ENCODE measurements at regions of chr6 and their contacts with region 1.

Region 1: DNA sequence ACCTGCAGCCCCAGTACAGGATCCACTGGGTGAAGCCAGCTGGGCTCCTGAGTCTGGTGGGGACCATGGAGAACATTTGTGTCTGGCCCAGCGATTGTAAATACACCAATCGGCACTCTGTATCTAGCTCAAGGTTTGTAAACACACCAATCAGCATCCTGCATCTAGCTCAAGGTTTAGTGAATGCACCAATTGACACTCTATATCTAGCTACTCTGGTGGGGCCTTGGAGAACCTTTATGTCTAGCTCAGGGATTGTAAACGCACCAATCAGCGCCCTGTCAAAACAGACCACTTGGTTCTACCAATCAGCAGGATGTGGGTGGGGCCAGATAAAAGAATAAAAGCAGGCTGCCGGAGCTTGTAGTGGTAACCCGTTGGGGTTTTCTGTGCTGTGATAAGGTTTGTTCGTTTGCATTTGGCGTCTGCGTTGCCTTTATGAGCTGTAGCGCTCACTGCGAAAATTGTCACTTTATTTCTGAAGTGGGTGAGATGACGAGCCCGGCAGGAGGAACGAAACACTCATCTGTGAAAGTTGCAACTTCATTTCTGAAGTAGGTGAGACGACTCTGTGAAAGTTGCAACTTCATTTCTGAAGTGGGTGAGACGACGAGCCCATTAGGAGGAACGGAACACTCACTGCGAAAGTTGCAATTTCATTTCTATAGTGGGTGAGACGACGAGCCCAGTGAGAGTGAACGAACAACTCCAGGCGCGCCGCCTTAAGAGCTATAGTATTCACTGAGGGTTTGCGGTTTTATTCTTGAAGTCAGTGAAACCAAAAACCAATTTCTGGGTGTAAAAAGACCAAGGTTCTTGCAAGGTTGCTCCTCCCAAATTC is 31.1 kb downstream of the SERPINB6 start:
- DNase-seq: no peak
- ATAC-seq: no peak
- H3K4me3 ChIP-seq: no peak overlapping the region
- H3K27ac ChIP-seq: no peak overlapping the region
- H3K4me1 ChIP-seq: no peaks in the 10 kb centered on the region
- H3K27me3 ChIP-seq: no peaks in the 10 kb centered on the region
- CTCF ChIP-seq: no peak
- POLR2A ChIP-seq: peak in 1 of 3 donors; percentile 17

Region 2: DNA sequence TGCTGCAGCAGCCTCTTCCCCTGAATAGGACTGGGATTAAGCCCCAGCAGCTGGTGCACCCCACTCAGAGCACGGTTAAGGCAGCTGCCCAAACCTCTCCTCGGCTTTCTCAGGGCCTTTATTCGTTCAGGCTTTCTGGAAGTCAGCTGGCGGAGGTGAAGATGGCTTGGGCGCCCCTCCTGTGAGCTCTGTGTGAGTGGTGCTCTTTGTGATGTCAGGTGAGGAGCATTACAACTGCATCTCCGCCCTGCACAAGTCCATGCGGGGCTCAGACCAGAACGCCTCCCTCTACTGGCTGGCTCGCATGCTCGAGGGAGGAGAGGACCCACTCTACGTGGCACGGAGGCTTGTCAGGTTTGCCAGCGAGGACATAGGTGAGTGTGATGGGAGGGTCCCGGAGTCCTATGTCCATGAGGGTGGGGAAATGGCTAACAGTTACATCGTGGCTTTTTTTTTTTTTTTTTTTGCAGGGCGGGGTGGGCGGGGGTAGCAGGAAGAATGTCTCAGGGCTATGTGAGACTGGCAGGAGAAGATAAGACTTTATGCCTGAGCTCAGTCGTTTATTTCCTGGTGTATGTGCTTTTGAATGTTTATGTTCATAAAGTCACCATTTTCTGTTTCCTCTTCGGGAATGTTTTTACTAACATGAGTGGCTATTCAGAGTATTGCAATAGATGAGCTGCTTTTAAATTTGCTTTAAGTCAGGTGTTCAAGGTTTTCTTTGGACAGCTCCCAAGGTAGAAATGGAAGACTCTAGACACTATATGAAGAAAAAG is 156.9 kb before region 1 on chr6:
- intact Hi-C with region 1: loop called (anchors 10 kb)
- DNase-seq: no peak
- ATAC-seq: no peak
- H3K4me3 ChIP-seq: no peak overlapping the region
- H3K27ac ChIP-seq: no peak overlapping the region
- H3K4me1 ChIP-seq: peaks cover 4% of the 10 kb centered on the region
- H3K27me3 ChIP-seq: no peaks in the 10 kb centered on the region
- CTCF ChIP-seq: peak in 1 of 7 experiments; percentile 9
- POLR2A ChIP-seq: no peak

Region 3: GRCh38 chr6:2857580-2858337 is 82.5 kb before region 1 on chr6:
- intact Hi-C with region 1: loop called (anchors 5 kb)
- DNase-seq: no peak
- ATAC-seq: no peak
- H3K4me3 ChIP-seq: no peak overlapping the region
- H3K27ac ChIP-seq: peak overlapping the region in 3 of 4 donors; percentile 8 to 62 (median 45)
- H3K4me1 ChIP-seq: peaks cover 30% of the 10 kb centered on the region
- H3K27me3 ChIP-seq: no peaks in the 10 kb centered on the region
- CTCF ChIP-seq: no peak
- POLR2A ChIP-seq: no peak

Region 4: DNA sequence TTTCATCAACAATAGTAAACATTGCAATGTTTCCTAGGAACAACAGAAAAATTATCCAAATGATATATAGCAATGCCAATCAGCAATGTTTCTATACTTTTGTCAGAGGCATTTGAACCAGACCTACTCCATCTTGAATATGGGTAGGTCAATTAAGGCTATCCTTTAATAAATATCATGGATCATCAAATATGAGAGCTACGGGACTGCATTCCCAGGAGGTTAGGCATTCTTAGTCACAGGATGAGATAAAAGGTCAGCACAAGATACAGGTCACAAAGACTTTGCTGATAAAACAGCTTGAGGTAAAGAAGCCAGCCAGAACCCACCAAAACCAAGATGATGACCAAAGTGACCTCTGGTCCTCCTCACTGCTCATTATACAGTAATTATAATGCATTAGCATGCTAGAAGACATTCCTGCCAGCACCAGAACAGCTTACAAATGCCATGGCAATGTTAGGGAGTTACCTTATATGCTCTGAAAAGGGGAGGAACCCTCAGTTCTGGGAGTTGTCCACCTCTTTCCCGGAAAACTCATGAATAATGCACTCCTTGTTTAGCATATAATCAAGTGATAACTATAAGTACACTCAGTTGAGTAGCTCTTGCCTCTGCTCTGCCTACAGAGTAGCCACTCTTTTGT is 39.7 kb after region 1 on chr6:
- intact Hi-C with region 1: loop called (anchors 5 kb)
- DNase-seq: no peak
- ATAC-seq: peak; percentile 27
- H3K4me3 ChIP-seq: no peak overlapping the region
- H3K27ac ChIP-seq: no peak overlapping the region
- H3K4me1 ChIP-seq: no peaks in the 10 kb centered on the region
- H3K27me3 ChIP-seq: no peaks in the 10 kb centered on the region
- CTCF ChIP-seq: no peak
- POLR2A ChIP-seq: no peak

Region 5: GRCh38 chr6:2999618-3000557 is 59.7 kb after region 1 on chr6 and contains the start of gene NQO2:
- intact Hi-C with region 1: no loop called
- DNase-seq: peak; percentile 93 to 97 (median 96)
- ATAC-seq: peak; percentile 89
- H3K4me3 ChIP-seq: peak within 1 kb of the TSS; percentile 60 to 79
- H3K27ac ChIP-seq: peak within 1 kb of the TSS; percentile 80 to 92 (median 86)
- H3K4me1 ChIP-seq: peaks cover 32% of the 10 kb centered on the region
- H3K27me3 ChIP-seq: no peaks in the 10 kb centered on the region
- CTCF ChIP-seq: peak in 2 of 7 experiments; percentile 16 to 17
- POLR2A ChIP-seq: peak; percentile 77 to 93 (median 92)
- total RNA-seq, gene NQO2: 7.3 to 17.1 TPM

Measured in body of pancreas (tissue), 4 donors.